Stomach (tissue), 19 donors: ENCODE measurements at regions of chr17 and their contacts with region 1.

Region 1: GRCh38 chr17:29369831-29370735 is 20.1 kb upstream of the TAOK1 start:
- DNase-seq: peak; percentile 66 to 89
- H3K4me3 ChIP-seq: no peak overlapping the region
- H3K27ac ChIP-seq: peak overlapping the region; percentile 1 to 67 (median 52)
- H3K4me1 ChIP-seq: peaks cover 4 to 11% (median 9%) of the 10 kb centered on the region in 4 donors
- H3K27me3 ChIP-seq: no peaks in the 10 kb centered on the region
- CTCF ChIP-seq: peak in 5 of 7 experiments; percentile 73 to 88 (median 74)
- EP300 ChIP-seq: no peak
- POLR2A ChIP-seq: no peak

Region 2: DNA sequence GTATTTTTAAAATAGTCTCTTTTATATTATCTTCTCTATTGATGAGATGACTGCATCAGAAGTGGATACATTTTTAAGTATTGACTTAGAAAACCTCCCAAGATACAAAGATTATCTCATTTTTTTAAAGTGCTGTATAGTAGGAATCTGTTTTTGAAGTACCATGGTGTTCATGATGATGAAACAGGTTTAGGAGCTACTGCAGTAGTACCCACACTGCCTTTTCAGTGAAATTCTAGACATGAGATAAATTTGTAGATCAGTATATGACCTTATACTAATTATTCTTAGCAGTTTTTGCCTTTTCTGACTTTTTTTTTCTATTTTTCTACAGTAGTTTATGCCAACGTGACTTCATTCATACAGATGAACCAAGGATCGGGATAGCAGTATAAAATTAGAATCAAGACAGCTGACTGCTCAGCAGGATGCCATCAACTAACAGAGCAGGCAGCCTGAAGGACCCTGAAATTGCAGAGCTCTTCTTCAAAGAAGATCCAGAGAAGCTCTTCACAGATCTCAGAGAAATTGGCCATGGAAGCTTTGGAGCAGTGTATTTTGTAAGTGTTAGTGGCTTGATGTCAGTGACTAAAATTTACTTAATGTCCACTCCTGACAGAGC is 81.1 kb after region 1 on chr17:
- intact Hi-C with region 1: loop called (anchors 10 kb)
- DNase-seq: no peak
- H3K4me3 ChIP-seq: no peak overlapping the region
- H3K27ac ChIP-seq: no peak overlapping the region
- H3K4me1 ChIP-seq: peaks cover 0 to 36% (median 20%) of the 10 kb centered on the region in 4 donors
- H3K27me3 ChIP-seq: no peaks in the 10 kb centered on the region
- CTCF ChIP-seq: no peak
- EP300 ChIP-seq: no peak
- POLR2A ChIP-seq: no peak

Region 3: GRCh38 chr17:29533976-29534375 is 163.9 kb after region 1 on chr17:
- intact Hi-C with region 1: loop called (anchors 5 kb)
- DNase-seq: no peak
- H3K4me3 ChIP-seq: no peak overlapping the region
- H3K27ac ChIP-seq: no peak overlapping the region
- H3K4me1 ChIP-seq: no peaks in the 10 kb centered on the region
- H3K27me3 ChIP-seq: no peaks in the 10 kb centered on the region
- CTCF ChIP-seq: no peak
- EP300 ChIP-seq: no peak
- POLR2A ChIP-seq: no peak